SK-MEL-5 (cell line): ENCODE measurements at regions of chr10 and their contacts with region 1.

Region 1: DNA sequence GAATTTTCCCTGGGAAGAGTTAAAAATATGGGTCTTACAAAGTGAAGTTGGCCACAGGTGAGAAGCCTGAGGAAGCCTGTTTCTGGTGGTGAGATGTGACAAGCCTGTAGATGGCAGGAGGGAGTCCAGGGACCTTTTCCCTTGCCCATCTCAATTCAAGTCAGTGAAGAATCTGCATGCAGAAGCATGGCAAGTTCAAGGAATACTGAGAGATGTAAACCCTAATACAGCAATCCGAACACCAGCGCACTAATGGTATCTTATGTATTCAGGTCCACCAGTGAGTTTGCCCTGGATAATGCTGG is 73.6 kb downstream of the RHOBTB1 start:
- DNase-seq: peak; percentile 34

Region 2: DNA sequence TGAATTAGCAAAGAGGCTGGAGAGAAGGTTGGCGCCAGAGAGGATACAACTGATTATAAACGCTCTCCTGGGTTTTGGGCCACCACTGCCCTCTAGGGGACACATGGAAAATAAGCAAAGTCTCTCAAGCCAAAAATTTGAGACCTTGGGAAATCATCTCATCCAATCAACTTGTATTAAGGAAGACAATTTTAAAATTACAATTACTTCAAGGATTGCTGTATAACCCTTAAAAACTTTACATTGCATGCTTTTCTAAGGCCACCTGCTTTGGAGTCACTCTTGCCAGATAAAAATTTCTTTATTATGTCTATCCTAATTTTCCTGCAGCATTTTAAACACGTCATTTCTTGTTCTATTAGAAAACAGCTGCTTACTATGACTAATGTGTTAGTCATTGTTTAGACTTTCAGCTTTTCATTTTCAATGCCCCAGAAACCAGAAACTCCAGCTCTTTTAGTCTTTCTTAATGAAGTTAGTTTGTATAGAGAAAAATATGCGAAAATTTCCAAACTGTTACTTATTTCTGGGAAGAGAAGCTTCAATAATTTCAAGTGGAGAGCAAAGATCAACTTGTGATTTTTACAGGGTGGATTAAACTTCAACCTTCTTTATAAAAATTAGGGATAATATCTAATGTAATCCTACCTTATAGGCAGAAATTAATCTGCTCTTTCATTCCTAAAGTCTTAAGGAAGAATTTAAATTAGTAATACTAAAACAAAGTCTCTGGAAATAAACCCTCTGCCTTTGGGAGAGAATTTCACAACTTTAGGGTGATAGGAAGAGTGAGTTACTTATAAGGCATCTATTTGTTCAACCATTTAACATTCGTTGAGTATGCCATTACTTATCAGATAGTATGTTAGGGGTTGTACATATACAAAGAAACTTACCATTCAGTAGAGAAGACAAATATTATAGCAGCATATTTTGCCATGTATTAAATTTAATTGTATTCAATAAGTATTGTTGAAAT is 94.2 kb after region 1 on chr10:
- in situ Hi-C with region 1: loop called (anchors 25 kb)
- DNase-seq: peak; percentile 86